MCF 10A (cell line): ENCODE measurements at regions of chr12 and their contacts with region 1.

Region 1: DNA sequence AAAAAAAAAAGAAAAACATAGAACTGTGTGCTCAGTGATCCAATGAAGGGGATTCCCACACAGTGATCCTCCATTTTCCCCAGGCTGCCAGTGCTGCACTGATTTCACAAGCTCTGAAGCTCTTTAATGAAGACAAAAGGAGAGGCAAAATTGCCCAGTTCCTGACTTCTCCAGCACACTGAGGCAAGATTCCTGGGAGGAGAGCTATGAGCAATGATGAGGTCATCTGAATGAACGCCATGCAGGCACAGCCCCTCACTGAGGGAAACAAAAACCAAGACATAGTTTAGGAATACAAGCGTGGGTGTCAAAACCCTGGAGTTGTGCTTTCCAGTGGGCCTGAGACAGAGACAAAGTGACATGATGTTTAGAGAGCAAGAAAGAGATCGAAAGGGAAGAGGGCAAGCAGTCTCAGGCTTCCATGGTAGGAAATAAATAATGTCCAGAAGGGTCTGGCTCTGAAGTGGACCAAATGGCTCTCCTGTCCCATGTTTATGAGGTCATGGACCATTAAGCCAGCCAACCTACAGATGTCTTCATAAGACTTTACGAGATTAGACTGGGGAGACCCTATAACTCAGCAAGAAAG is 40.9 kb upstream of the SMUG1 start:
- DNase-seq: peak; percentile 96
- H3K4me3 Mint-ChIP-seq: peak overlapping the region; percentile 0
- H3K27ac Mint-ChIP-seq: peak overlapping the region; percentile 83
- H3K4me1 Mint-ChIP-seq: peaks cover 17% of the 10 kb centered on the region
- H3K27me3 Mint-ChIP-seq: no peaks in the 10 kb centered on the region
- CTCF ChIP-seq: no peak

Region 2: GRCh38 chr12:54214553-54215406 is 14.9 kb before region 1 on chr12:
- CTCF ChIA-PET with region 1: interaction called, 37 read pairs
- POLR2A ChIA-PET with region 1: interaction called, 4 read pairs
- intact Hi-C with region 1: no loop called
- DNase-seq: peak; percentile 93
- H3K4me3 Mint-ChIP-seq: peak overlapping the region; percentile 26
- H3K27ac Mint-ChIP-seq: no peak overlapping the region
- H3K4me1 Mint-ChIP-seq: peaks cover 12% of the 10 kb centered on the region
- H3K27me3 Mint-ChIP-seq: no peaks in the 10 kb centered on the region
- CTCF ChIP-seq: peak; percentile 99

Region 3: DNA sequence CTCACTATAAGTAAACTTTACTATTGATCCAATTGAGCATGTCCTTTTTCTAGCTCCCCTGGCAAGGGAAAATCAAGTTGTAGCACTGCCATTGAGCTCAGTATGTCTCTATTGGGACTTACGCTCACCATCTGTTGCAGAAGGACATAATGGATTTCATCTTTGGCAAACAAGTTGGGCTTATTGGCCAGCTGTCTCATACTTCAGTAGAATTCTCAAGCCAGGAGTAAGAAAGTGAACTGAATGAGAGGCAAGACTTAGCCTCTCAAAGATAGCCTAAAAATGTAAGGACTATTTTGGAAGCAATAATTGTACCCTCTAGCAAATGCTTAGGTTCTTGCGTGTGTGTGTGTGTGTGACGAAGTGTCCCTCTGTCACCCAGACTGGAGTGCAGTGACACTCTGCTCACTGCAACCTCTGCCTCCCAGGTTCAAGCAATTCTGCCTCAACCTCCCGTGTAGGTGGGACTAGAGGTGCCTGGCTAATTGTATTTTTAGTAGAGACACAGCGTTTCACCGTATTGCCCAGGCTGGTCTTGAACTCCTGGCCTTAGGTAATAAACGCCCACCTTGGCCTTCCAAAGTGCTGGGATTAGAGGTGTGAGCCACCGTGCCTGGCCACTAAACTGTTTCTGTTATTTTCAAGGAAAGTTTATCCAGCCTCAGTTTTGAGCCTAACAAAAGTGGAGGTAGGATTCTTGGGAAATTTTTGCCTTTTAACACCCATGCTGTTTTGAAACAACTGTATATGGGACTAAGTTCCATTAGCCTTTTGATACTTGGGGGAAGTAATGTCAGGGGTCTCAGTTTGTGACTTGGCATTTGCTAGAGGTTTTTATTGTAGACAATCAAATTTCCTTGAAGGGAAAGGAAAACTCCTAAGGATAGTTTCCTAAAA is 57.8 kb after region 1 on chr12:
- CTCF ChIA-PET with region 1: no interaction called
- POLR2A ChIA-PET with region 1: no interaction called
- intact Hi-C with region 1: no loop called
- DNase-seq: no peak
- H3K4me3 Mint-ChIP-seq: no peak overlapping the region
- H3K27ac Mint-ChIP-seq: no peak overlapping the region
- H3K4me1 Mint-ChIP-seq: peaks cover 35% of the 10 kb centered on the region
- H3K27me3 Mint-ChIP-seq: no peaks in the 10 kb centered on the region
- CTCF ChIP-seq: no peak